ENCODE measurements at regions of chr12 and their contacts with region 1.

Region 1: DNA sequence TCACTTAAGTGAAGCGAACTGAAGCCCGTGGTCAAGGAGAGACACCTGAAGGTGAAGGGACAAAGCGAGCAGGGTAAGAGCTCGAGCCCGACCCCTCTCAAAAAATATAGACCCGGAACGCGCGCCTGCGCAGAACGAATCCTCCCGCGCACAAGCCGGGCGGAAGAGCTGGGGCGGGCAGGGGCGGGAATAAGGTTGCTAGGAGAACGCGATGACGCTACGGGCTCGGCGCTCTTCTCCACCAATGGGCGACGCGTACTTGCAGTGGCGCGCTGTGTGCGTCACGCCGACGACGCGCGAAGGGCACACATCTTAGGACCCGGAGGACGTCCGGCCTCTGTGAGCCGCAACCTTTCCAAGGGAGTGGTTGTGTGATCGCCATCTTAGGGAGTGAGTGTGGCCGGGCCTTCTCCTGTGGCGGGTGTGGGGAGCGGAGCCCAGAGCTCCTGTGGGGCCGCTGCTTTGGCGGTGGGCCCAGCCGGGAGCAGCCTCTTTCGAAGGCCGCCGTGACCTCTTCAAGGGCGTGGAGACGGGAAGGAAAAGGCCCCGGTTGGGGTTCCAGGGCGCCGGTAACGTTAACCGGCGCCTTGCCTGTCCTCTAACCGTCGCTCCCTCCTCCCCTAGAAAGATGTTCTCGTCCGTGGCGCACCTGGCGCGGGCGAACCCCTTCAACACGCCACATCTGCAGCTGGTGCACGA is at the start of gene SLC25A3:
- DNase-seq: peak; percentile 98
- H3K4me3 ChIP-seq: peak within 1 kb of the TSS; percentile 99
- H3K27ac ChIP-seq: peak within 1 kb of the TSS; percentile 92
- H3K27me3 ChIP-seq: no peaks in the 10 kb centered on the region
- CTCF ChIP-seq: no peak
- polyA plus RNA-seq, gene SLC25A3: 974 and 1,138 TPM in 2 replicates

Region 2: GRCh38 chr12:98644711-98645402 is 51.4 kb after region 1 on chr12 and contains the starts of genes APAF1 and IKBIP:
- CTCF ChIA-PET with region 1: no interaction called
- POLR2A ChIA-PET with region 1: interaction called, 25 read pairs
- DNase-seq: peak; percentile 88
- H3K4me3 ChIP-seq: peak within 1 kb of the TSS; percentile 92
- H3K27ac ChIP-seq: peak within 1 kb of the TSS; percentile 93
- H3K27me3 ChIP-seq: no peaks in the 10 kb centered on the region
- CTCF ChIP-seq: 0 out of 2 replicates have a peak, but pooled peaks have one; percentile 20
- polyA plus RNA-seq, gene APAF1: 16.1 and 21.0 TPM in 2 replicates
- polyA plus RNA-seq, gene IKBIP: 51.8 and 81.5 TPM in 2 replicates

Region 3: DNA sequence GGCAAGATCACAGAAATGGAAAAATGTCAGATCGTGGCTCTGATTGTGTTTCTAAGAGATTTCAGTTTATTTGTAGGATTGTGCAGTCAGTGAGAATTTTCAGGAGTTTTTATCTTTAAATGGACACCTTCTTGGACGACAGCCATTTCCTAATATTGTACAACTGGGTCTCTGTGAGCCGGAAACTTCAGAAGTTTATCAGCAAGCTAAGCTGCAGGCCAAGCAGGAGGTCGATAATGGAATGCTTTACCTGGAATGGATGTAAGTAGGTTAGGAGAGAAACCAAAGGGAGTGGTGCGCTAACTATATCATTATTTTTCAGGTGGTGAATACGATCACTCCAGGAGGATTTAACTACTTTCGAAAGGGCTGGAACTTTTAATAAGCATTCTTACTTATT is 78.0 kb after region 1 on chr12:
- CTCF ChIA-PET with region 1: no interaction called
- POLR2A ChIA-PET with region 1: no interaction called
- DNase-seq: no peak
- H3K4me3 ChIP-seq: no peak overlapping the region
- H3K27ac ChIP-seq: no peak overlapping the region
- H3K27me3 ChIP-seq: no peaks in the 10 kb centered on the region
- CTCF ChIP-seq: no peak